ENCODE measurements at regions of chr2 and their contacts with region 1.

Region 1: DNA sequence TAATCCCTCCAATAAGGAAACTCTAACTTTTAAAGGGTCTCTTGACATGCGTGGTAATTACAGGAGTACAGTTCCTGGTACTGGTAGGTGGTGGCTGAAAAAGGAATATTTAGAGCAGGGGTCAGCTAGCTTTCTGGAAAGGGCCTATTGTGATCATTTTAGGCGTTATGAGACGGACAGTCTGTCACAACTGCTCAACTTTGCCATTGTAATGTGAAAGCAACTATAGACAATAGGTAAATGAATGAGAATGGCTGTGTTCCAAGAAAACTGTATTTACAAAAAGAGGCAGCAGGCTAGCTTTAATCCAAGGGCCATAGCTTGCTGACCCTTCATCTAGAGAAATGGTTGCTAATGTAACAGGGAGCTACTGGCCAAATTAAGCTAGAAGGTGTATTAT is 177.7 kb upstream of the LRRTM1 start:
- DNase-seq: no peak
- ATAC-seq: peak in 3 of 4 donors; percentile 27 to 65 (median 45)
- H3K4me3 ChIP-seq: no peak overlapping the region
- H3K27ac ChIP-seq: peak overlapping the region in 7 of 12 donors; percentile 10 to 70 (median 50)
- H3K4me1 ChIP-seq: peaks cover 0 to 4% (median 0%) of the 10 kb centered on the region in 12 donors
- H3K27me3 ChIP-seq: no peaks in the 10 kb centered on the region
- CTCF ChIP-seq: no peak
- POLR2A ChIP-seq: no peak

Region 2: GRCh38 chr2:80363791-80364349 is 118.4 kb before region 1 on chr2:
- intact Hi-C with region 1: loop called in 2 of 10 experiments (anchors 1 kb)
- DNase-seq: peak in 1 of 5 donors; percentile 12
- ATAC-seq: peak; percentile 32 to 79 (median 59)
- H3K4me3 ChIP-seq: peak overlapping the region in 5 of 12 donors; percentile 1 to 25 (median 12)
- H3K27ac ChIP-seq: peak overlapping the region in 9 of 12 donors; percentile 1 to 71 (median 32)
- H3K4me1 ChIP-seq: peaks cover 0 to 21% (median 5%) of the 10 kb centered on the region in 12 donors
- H3K27me3 ChIP-seq: no peaks in the 10 kb centered on the region
- CTCF ChIP-seq: no peak
- POLR2A ChIP-seq: no peak

Measured in heart left ventricle (tissue), 16 donors.